ENCODE measurements at regions of chr11 and their contacts with region 1.

Region 1: GRCh38 chr11:19951558-19952115 is 208.6 kb downstream of the DBX1 start:
- DNase-seq: peak; percentile 81
- H3K4me3 ChIP-seq: no peak overlapping the region
- H3K27ac ChIP-seq: peak overlapping the region; percentile 40
- H3K4me1 ChIP-seq: peaks cover 27% of the 10 kb centered on the region
- H3K27me3 ChIP-seq: no peaks in the 10 kb centered on the region
- CTCF ChIP-seq: peak; percentile 33 to 50
- POLR2A ChIP-seq: no peak

Region 2: DNA sequence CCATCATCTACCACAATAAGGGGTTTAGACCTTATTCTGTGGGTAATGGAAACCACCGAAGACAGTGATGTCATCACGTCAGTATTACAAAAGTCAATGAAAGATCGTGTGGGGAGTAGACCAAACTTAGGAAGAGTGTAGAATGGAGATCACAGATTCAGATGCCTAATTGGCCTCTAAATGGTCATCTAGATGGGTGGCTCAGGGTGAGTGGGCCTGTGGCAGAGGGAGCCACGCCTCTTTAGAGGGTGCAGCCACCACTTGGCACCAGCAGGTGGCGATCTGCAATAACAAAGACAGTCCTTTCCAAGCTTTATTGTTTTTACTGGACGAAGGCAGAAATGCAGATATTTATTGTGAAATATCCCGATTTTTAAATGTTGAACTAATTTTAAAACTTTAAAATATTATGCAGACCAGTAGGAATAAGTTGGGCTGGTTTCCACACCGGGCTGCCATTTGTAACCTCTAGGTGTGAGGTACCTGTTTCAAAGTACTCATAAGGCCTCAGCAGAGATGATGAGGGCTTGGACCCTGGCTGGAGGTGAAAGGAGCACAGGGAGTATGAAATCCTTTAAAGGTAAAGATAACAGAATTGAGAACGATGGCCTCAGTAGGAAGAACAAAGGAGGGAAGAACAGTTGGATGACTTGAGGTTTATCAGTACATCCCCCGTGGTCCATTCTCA is 13.3 kb before region 1 on chr11:
- CTCF ChIA-PET with region 1: interaction called, 13 read pairs
- POLR2A ChIA-PET with region 1: no interaction called
- dilution Hi-C with region 1: no loop called
- intact Hi-C with region 1: no loop called
- DNase-seq: peak; percentile 71
- H3K4me3 ChIP-seq: no peak overlapping the region
- H3K27ac ChIP-seq: no peak overlapping the region
- H3K4me1 ChIP-seq: peaks cover 9% of the 10 kb centered on the region
- H3K27me3 ChIP-seq: no peaks in the 10 kb centered on the region
- CTCF ChIP-seq: peak; percentile 79 to 88
- POLR2A ChIP-seq: no peak

Region 3: DNA sequence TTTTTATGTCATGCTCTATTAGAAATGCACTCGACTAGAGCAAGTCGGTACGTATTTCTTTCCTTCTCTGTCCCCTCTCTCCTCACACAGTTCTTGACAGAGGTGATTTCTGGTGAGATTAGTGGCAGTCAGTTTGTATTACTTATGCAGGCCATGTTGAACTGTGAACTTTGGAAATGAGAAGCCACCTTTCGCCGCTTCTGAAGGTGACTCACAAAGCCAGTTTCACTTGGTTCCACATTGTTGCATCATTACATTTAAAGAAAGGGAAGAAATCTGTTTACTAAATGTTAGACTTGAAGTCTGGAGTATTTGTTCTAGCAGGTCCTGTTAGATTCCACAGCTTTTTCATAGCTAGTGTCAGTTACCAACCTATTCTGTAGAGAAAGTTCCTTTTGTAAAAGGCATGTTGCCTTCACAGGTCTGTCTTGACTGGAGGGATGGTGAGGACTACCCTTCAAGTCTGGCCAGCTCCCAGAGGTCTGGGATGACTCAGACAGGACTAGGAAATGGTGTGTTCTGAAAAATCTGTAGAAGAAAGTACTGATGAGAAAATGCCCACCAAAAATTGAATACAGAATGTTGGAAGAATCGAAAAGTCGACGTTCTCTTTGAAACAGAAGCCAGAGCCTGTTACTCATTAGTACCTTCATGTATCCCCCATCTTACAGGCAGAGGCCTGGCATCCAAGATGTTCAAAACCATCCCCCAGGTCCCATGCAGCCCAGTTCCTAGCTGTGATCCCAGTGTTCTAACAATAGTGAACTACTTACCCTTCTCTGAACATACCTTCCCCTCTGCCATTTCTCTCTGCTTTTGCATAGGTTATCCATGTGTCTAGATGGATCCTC is 27.3 kb after region 1 on chr11:
- CTCF ChIA-PET with region 1: interaction called, 8 read pairs
- POLR2A ChIA-PET with region 1: no interaction called
- dilution Hi-C with region 1: no loop called
- intact Hi-C with region 1: loop called (anchors 1 kb)
- DNase-seq: peak; percentile 85
- H3K4me3 ChIP-seq: no peak overlapping the region
- H3K27ac ChIP-seq: peak overlapping the region; percentile 66
- H3K4me1 ChIP-seq: peaks cover 39% of the 10 kb centered on the region
- H3K27me3 ChIP-seq: no peaks in the 10 kb centered on the region
- CTCF ChIP-seq: no peak
- POLR2A ChIP-seq: no peak

Region 4: DNA sequence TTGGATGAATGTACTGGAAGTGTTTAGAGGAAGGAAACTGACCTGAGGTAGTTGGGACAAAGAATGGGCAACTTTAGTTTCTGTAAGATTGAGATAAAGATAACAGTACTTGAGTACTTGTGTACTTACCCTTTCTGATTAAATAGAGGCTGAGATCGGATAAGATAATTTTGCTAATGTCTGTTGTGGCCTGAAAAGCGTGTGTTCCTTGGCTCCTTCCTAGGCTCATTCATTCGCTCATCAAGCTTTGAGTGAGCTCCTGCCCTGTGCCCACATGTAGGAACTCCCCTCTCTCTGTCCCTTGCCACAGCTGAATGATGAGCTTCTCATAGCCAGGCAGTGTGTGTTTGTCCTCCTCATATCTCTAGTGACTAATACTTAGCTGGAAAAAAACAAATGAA is 90.5 kb after region 1 on chr11:
- CTCF ChIA-PET with region 1: interaction called, 6 read pairs
- POLR2A ChIA-PET with region 1: interaction called, 3 read pairs
- dilution Hi-C with region 1: no loop called
- intact Hi-C with region 1: loop called (anchors 1 kb)
- DNase-seq: peak; percentile 69
- H3K4me3 ChIP-seq: no peak overlapping the region
- H3K27ac ChIP-seq: peak overlapping the region; percentile 56
- H3K4me1 ChIP-seq: peaks cover 15% of the 10 kb centered on the region
- H3K27me3 ChIP-seq: no peaks in the 10 kb centered on the region
- CTCF ChIP-seq: no peak
- POLR2A ChIP-seq: no peak

Region 5: DNA sequence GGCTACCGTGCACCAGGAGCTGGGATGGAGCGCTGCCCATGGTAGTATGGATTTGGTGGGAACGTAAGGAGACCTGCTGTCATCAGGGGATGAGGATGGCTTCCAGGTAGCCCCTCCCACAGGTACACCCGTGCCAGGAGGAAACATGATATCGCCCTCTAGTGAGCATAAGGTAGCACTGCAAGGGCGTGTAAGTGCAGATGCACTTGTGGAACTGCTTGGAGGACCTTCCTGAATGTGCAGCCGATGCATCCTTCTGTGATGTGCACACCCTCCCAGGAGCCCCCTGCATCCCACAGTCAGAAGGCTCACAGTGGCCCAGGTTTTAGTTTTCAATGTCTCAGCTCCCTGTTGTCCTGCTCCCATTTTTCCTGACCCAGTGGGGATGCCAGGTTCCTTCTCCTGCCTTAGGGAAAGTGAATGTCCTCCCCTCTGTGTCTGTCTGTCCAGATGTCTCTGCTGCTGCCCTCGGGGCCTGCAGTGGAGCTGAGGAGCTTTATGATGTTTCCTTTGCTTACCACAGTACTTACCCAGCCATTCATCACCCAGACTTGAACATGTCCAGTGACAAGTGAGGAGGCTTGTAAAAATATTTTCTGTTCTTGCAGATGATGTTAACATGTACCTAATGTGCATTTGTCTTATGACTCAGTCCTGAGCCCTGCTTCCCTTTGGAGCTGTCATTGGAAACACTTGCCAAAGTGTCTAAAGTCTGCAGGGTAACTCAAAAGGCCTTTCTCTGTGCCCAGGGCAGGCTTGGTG is 159.5 kb after region 1 on chr11:
- CTCF ChIA-PET with region 1: interaction called, 44 read pairs
- POLR2A ChIA-PET with region 1: no interaction called
- dilution Hi-C with region 1: no loop called
- intact Hi-C with region 1: loop called (anchors 1 kb)
- DNase-seq: peak; percentile 61
- H3K4me3 ChIP-seq: no peak overlapping the region
- H3K27ac ChIP-seq: peak overlapping the region; percentile 88
- H3K4me1 ChIP-seq: peaks cover 38% of the 10 kb centered on the region
- H3K27me3 ChIP-seq: no peaks in the 10 kb centered on the region
- CTCF ChIP-seq: peak; percentile 83 to 89
- POLR2A ChIP-seq: no peak

Region 6: GRCh38 chr11:20355221-20356219 is 403.9 kb after region 1 on chr11:
- CTCF ChIA-PET with region 1: interaction called, 12 read pairs
- POLR2A ChIA-PET with region 1: no interaction called
- dilution Hi-C with region 1: no loop called
- intact Hi-C with region 1: loop called (anchors 2 kb)
- DNase-seq: peak; percentile 64
- H3K4me3 ChIP-seq: no peak overlapping the region
- H3K27ac ChIP-seq: no peak overlapping the region
- H3K4me1 ChIP-seq: peaks cover 6% of the 10 kb centered on the region
- H3K27me3 ChIP-seq: peaks cover 2 to 10% of the 10 kb centered on the region in 2 experiments
- CTCF ChIP-seq: peak; percentile 47 to 68
- POLR2A ChIP-seq: no peak